Ovary (tissue), 10 donors: ENCODE measurements at regions of chr5 and their contacts with region 1.

Region 1: DNA sequence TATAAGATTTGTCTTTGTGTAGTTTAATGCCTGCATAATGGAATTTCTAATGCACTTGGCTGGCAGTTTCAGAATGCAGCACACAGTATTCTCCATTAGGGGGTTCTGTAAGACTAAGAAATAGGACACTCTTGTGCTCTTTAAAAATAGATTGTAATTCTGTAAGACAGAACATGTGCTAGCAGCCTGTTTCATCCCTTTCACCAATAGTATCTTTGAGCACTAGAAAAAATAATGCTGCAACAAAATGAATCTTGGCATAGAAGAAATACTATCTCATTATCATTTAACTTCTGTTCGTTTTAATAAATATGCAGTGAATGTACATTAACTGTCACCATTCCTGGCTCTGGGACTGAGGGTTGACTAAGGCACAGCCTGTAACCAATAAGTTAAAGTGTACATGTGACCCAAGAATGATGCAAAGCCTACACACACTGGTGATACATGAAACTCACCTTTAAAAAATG is 23.8 kb upstream of the ZNF622 start:
- DNase-seq: no peak
- H3K4me3 ChIP-seq: no peak overlapping the region
- H3K27ac ChIP-seq: no peak overlapping the region
- H3K4me1 ChIP-seq: no peaks in the 10 kb centered on the region
- H3K27me3 ChIP-seq: no peaks in the 10 kb centered on the region
- CTCF ChIP-seq: peak in 2 of 3 donors; percentile 51 to 68
- EP300 ChIP-seq: no peak
- POLR2A ChIP-seq: no peak

Region 2: GRCh38 chr5:15366676-15367391 is 1122.5 kb before region 1 on chr5:
- intact Hi-C with region 1: no loop called
- DNase-seq: no peak
- H3K4me3 ChIP-seq: no peak overlapping the region
- H3K27ac ChIP-seq: no peak overlapping the region
- H3K4me1 ChIP-seq: peaks cover 2% of the 10 kb centered on the region
- H3K27me3 ChIP-seq: no peaks in the 10 kb centered on the region
- CTCF ChIP-seq: no peak
- EP300 ChIP-seq: no peak
- POLR2A ChIP-seq: no peak

Region 3: DNA sequence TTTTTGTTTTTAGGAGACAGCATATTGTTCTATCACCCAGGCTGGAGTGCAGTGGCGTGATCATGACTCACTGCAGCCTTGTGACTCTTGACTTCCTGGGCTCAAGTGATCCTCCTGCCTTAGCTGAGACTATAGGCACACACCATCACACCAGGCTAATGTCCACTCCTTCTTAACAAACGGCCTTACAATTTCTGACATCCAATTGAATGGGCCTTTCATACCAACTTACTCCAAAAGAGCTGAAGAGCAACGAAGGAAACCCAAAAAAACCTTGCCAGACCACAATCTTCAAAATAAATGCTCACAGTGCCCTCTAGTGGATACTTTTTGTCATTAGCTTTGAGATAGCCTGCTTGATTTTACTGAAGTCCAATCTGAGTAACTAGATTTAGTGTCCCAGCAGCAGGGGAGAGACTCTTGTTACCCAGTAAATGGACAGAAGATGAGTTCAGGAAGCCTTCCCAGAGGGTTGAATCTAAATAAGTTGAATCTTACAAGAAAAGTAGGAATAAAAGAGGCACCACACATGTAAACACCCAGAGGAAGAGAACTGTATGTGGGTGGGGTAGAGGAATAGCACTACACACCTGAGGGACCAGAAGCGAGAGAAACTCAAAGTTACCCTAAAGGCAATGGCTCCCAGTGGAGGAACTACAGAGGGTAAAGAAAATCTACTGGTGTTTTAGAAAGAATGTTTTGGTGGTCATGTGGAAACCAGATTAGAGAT is 33.1 kb before region 1 on chr5:
- intact Hi-C with region 1: loop called in 1 of 4 experiments (anchors 1 kb)
- DNase-seq: peak in 2 of 5 donors; percentile 13 to 26
- H3K4me3 ChIP-seq: no peak overlapping the region
- H3K27ac ChIP-seq: no peak overlapping the region
- H3K4me1 ChIP-seq: peaks cover 2% of the 10 kb centered on the region
- H3K27me3 ChIP-seq: no peaks in the 10 kb centered on the region
- CTCF ChIP-seq: peak; percentile 46 to 60 (median 51)
- EP300 ChIP-seq: no peak
- POLR2A ChIP-seq: no peak

Region 4: DNA sequence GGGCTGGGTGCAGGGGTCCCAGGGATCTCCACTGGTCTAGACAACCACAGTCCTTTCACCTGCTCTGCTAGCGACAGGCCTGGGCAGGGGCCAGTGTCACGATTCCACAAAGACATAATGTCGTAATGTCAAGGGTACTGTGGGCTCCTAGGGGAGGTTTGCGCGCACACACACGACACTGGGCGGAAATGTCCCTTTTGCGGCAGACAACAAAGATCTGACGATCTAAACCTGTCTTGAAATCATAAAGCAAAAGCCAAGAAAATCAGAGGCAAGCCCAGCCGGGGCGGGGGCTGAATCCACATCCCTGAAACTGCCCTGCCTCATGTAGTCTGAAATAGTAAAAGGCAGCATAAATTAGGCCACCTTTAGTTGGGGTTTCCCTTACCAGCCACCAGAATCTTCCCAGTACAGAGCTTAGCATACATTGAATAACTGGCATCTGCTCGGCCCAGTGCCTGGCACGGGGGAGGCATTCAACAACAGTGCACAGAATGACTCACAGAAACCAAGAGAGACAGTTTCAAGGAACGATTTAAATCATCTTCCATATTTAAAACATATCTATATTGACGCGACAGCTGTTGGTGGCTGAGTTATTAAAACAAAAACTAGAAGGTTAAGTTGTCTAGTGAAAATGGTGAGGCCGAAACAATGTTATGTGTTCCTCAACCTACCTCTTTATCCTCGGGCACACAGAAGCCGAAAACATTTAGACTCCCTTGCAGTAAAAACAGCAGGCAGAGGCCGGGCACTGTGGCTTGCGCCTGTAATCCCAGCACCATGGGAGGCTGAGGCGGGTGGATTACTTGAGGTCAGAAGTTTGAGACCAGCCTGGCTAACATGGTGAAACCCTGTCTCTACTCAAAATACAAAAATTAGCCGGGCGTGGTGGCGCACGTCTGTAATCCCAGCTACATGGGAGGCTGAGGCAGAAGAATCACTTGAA is 295.8 kb after region 1 on chr5:
- intact Hi-C with region 1: loop called in 1 of 4 experiments (anchors 10 kb)
- DNase-seq: no peak
- H3K4me3 ChIP-seq: no peak overlapping the region
- H3K27ac ChIP-seq: no peak overlapping the region
- H3K4me1 ChIP-seq: no peaks in the 10 kb centered on the region
- H3K27me3 ChIP-seq: no peaks in the 10 kb centered on the region
- CTCF ChIP-seq: no peak
- EP300 ChIP-seq: no peak
- POLR2A ChIP-seq: no peak

Region 5: GRCh38 chr5:16797951-16798350 is 308.6 kb after region 1 on chr5:
- intact Hi-C with region 1: no loop called
- DNase-seq: no peak
- H3K4me3 ChIP-seq: no peak overlapping the region
- H3K27ac ChIP-seq: no peak overlapping the region
- H3K4me1 ChIP-seq: no peaks in the 10 kb centered on the region
- H3K27me3 ChIP-seq: no peaks in the 10 kb centered on the region
- CTCF ChIP-seq: no peak
- EP300 ChIP-seq: no peak
- POLR2A ChIP-seq: no peak

Region 6: DNA sequence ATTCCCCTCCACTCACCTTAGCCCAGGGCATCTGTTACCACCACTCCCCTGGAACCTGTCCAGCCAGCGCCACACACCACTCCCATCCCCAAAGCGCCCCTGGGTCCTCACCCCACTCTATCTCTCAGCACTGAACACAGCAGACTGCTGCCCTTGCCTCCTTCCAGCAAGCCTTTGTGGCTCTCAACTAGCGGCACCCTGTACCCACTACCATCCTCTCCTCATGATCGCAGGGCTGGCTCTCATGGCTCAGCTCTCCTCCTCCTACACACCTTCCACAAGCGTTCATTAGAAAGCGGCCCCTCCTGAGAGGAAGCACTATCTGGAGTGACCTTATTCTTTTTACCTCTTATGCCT is 714.8 kb after region 1 on chr5:
- intact Hi-C with region 1: loop called in 3 of 4 experiments (anchors 5 to 10 kb)
- DNase-seq: no peak
- H3K4me3 ChIP-seq: no peak overlapping the region
- H3K27ac ChIP-seq: no peak overlapping the region
- H3K4me1 ChIP-seq: no peaks in the 10 kb centered on the region
- H3K27me3 ChIP-seq: no peaks in the 10 kb centered on the region
- CTCF ChIP-seq: no peak
- EP300 ChIP-seq: no peak
- POLR2A ChIP-seq: no peak